Mammary epithelial cell (primary cell): ENCODE measurements at regions of chr11 and their contacts with region 1.

Region 1: GRCh38 chr11:33065445-33066178 is 26.2 kb downstream of the TCP11L1 start:
- DNase-seq: peak; percentile 52
- H3K4me3 ChIP-seq: no peak overlapping the region
- H3K27ac ChIP-seq: no peak overlapping the region
- H3K4me1 ChIP-seq: peaks cover 41% of the 10 kb centered on the region
- H3K27me3 ChIP-seq: no peaks in the 10 kb centered on the region
- CTCF ChIP-seq: peak; percentile 87 to 92

Region 2: DNA sequence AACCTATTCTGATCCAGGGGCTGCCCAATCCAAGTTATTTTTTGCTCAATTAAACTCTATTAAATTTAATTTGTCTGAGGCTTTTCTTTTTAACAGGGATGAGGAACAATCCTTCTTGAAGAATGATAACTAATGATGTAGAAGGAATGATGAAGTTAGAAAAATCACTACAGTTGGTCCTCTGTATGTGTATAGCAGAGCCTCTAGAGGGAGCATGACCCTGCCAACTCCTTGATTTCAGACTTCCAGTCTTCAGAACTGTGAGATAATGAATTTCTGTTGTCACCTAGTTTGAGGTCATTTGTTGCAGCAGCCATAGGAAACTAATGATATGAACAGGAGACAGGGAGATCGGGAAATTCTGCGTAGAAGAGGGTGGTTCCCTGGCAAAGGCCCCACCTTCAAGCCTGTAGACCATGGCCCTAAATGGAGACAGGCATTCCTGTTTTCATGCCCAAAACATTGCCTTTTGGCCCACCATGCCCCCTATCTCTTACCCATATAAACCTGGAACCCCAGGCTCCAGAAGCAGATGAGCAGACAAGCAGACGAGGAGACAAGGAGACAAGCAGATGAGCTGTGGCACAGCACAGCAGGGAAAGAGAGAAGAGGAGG is 180.7 kb before region 1 on chr11:
- CTCF ChIA-PET with region 1: no interaction called
- dilution Hi-C with region 1: no loop called
- in situ Hi-C with region 1: no loop called
- intact Hi-C with region 1: loop called (anchors 2 kb)
- DNase-seq: no peak
- H3K4me3 ChIP-seq: no peak overlapping the region
- H3K27ac ChIP-seq: no peak overlapping the region
- H3K4me1 ChIP-seq: no peaks in the 10 kb centered on the region
- H3K27me3 ChIP-seq: no peaks in the 10 kb centered on the region
- CTCF ChIP-seq: peak; percentile 41 to 65

Region 3: GRCh38 chr11:32983506-32983905 is 82.1 kb before region 1 on chr11:
- CTCF ChIA-PET with region 1: no interaction called
- dilution Hi-C with region 1: no loop called
- in situ Hi-C with region 1: no loop called
- intact Hi-C with region 1: loop called (anchors 5 kb)
- DNase-seq: no peak
- H3K4me3 ChIP-seq: no peak overlapping the region
- H3K27ac ChIP-seq: no peak overlapping the region
- H3K4me1 ChIP-seq: no peaks in the 10 kb centered on the region
- H3K27me3 ChIP-seq: no peaks in the 10 kb centered on the region
- CTCF ChIP-seq: no peak

Region 4: DNA sequence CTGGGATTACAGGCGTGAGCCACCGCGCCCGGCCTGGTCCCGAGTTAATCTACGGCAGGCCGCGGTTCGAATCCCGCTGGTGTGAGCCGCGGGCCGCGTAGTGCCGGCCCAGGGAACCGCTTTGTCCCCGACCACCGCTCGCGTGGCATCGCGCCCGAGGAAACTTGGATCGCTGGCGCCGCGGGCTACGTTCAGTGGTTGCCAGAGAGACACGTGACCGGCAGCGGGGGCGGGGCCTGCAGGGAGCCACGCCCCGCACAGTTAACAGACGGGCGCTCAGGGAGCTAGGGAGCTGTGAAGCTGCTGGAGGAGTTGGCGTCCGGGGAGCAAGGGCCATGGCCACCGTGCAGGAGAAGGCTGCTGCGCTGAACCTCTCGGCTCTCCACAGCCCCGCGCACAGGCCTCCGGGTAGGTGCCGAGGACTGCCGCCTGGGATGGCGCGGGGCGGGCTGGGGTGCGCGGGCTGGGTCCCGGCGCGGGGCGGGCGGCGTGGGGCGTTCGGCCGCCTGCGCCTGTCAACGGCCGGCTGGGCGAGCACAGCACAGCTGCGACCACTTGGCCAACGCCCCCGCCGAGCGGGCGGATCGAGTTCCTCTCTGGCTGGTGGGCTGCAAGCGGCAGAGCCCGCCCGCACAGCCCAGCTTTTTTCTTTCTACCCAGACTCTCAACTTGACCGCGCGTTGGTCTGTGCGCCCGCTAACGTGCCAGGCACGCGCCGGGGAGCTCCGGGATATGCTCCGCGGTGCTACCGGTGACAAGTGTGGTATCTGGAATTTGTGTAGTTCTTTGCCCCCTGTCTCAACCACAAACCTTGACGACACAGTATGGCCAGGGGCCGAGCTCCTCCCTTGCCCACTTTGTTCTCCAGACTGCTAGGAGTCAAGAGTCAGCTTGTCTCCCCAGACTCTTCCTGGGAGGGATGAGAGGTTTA is 49.7 kb before region 1 on chr11 and contains the start of gene DEPDC7:
- CTCF ChIA-PET with region 1: no interaction called
- dilution Hi-C with region 1: no loop called
- in situ Hi-C with region 1: no loop called
- intact Hi-C with region 1: loop called (anchors 2 kb)
- DNase-seq: peak; percentile 78
- H3K4me3 ChIP-seq: peak within 1 kb of the TSS; percentile 57 to 73 (median 70)
- H3K27ac ChIP-seq: no peak within 1 kb of the TSS
- H3K4me1 ChIP-seq: peaks cover 15% of the 10 kb centered on the region
- H3K27me3 ChIP-seq: no peaks in the 10 kb centered on the region
- CTCF ChIP-seq: no peak
- total RNA-seq, gene DEPDC7: 5.2 to 6.8 TPM